Mammary epithelial cell (primary cell): ENCODE measurements at regions of chr6 and their contacts with region 1.

Region 1: GRCh38 chr6:106360410-106360988 is at the start of gene CRYBG1:
- DNase-seq: peak; percentile 91
- H3K4me3 ChIP-seq: peak within 1 kb of the TSS; percentile 82 to 94 (median 92)
- H3K27ac ChIP-seq: peak within 1 kb of the TSS; percentile 68
- H3K4me1 ChIP-seq: peaks cover 14% of the 10 kb centered on the region
- H3K27me3 ChIP-seq: no peaks in the 10 kb centered on the region
- CTCF ChIP-seq: peak; percentile 71 to 89
- total RNA-seq, gene CRYBG1: 78.5 to 92.9 TPM

Region 2: DNA sequence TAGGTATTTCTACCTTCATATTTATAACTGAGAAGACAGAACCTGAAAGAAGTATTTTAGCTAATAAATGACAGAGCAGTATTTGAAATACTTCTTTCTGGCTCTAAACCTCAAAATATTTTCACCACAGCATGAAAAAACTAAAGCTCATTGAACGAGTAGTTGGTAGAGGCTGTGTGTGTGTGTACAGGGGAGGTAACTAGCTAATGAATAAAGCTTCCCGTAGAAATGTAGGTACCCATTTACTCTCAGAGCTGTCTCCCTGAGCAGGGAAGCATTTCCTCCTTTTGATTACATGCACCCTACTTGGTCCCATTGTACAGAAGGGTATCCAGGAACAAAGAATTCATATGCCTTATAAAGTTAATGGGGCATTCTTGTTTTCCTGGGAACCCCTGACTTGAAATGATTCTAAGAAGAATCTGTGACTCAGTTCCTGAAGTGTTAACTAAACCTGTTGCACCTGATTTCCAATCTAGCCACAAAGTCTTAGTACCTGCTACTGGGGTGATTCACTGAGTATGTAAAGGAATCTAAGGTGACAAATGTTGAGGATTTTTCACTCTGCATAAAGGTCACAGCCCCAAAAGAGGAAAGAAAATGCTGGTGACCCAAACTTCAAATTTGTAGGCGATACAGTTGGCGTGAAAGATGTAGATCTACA is 12.5 kb after region 1 on chr6:
- CTCF ChIA-PET with region 1: interaction called, 6 read pairs
- dilution Hi-C with region 1: no loop called
- in situ Hi-C with region 1: no loop called
- intact Hi-C with region 1: loop called (anchors 1 kb)
- DNase-seq: peak; percentile 86
- H3K4me3 ChIP-seq: no peak overlapping the region
- H3K27ac ChIP-seq: peak overlapping the region; percentile 86
- H3K4me1 ChIP-seq: peaks cover 78% of the 10 kb centered on the region
- H3K27me3 ChIP-seq: no peaks in the 10 kb centered on the region
- CTCF ChIP-seq: no peak

Region 3: GRCh38 chr6:106381871-106382270 is 21.4 kb after region 1 on chr6:
- CTCF ChIA-PET with region 1: interaction called, 3 read pairs
- dilution Hi-C with region 1: no loop called
- in situ Hi-C with region 1: no loop called
- intact Hi-C with region 1: loop called (anchors 1 kb)
- DNase-seq: peak; percentile 77
- H3K4me3 ChIP-seq: no peak overlapping the region
- H3K27ac ChIP-seq: peak overlapping the region; percentile 98
- H3K4me1 ChIP-seq: peaks cover 85% of the 10 kb centered on the region
- H3K27me3 ChIP-seq: no peaks in the 10 kb centered on the region
- CTCF ChIP-seq: peak in 1 of 2 donors; percentile 24

Region 4: DNA sequence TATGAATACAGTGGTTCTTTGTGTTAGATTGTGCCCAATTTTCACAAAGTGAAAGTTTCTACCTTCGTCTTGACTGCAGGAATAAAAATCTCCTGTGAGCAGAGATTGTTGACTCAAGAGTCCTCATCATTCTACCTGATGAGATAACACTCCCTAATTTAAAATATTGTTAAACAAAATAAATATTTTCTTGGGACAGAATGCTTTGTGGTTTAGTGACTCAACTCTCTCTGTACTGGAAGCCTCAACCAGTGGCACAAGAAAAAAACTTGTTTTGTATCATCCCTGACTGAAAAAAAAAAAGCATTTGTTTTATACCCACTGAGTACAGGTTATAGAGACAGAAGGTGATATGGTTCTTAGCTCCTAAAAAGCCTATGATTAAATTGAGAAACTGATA is 78.9 kb after region 1 on chr6:
- CTCF ChIA-PET with region 1: interaction called, 4 read pairs
- dilution Hi-C with region 1: loop called (anchors 5 kb)
- in situ Hi-C with region 1: no loop called
- intact Hi-C with region 1: loop called (anchors 1 kb)
- DNase-seq: peak; percentile 82
- H3K4me3 ChIP-seq: peak overlapping the region in 2 of 3 experiments; percentile 31 to 44
- H3K27ac ChIP-seq: peak overlapping the region; percentile 48
- H3K4me1 ChIP-seq: peaks cover 25% of the 10 kb centered on the region
- H3K27me3 ChIP-seq: no peaks in the 10 kb centered on the region
- CTCF ChIP-seq: no peak

Region 5: GRCh38 chr6:106512048-106512967 is 151.8 kb after region 1 on chr6:
- CTCF ChIA-PET with region 1: no interaction called
- dilution Hi-C with region 1: no loop called
- in situ Hi-C with region 1: no loop called
- intact Hi-C with region 1: loop called (anchors 2 kb)
- DNase-seq: peak; percentile 68
- H3K4me3 ChIP-seq: peak overlapping the region; percentile 41 to 62 (median 56)
- H3K27ac ChIP-seq: peak overlapping the region; percentile 70
- H3K4me1 ChIP-seq: peaks cover 41% of the 10 kb centered on the region
- H3K27me3 ChIP-seq: no peaks in the 10 kb centered on the region
- CTCF ChIP-seq: peak in 1 of 2 donors; percentile 22

Region 6: GRCh38 chr6:106556368-106556960 is 196.0 kb after region 1 on chr6:
- CTCF ChIA-PET with region 1: no interaction called
- dilution Hi-C with region 1: loop called (anchors 5 kb)
- in situ Hi-C with region 1: loop called (anchors 10 kb)
- intact Hi-C with region 1: no loop called
- DNase-seq: no peak
- H3K4me3 ChIP-seq: no peak overlapping the region
- H3K27ac ChIP-seq: no peak overlapping the region
- H3K4me1 ChIP-seq: peaks cover 26% of the 10 kb centered on the region
- H3K27me3 ChIP-seq: no peaks in the 10 kb centered on the region
- CTCF ChIP-seq: peak in 1 of 2 donors; percentile 47